ENCODE measurements at regions of chr4 and their contacts with region 1.

Region 1: DNA sequence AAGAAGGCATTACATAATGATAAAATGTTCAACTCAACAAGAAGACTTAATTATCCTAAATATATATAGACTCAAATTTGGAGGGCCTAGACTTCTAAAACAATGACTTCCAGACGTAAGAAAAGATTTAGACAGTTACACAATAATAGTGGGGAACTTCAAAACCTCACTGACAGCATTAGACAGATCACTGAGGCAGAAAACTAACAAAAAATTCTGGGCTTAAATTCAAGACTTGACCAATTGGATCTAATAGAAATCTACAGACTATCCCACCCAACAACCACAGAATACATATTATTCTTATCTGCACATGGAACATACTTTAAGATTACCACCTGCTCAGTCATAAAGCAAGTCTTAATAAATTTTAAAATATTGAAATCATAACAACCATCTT is 93.3 kb upstream of the ARSJ start:
- H3K4me3 Mint-ChIP-seq: no peak overlapping the region
- H3K27ac Mint-ChIP-seq: no peak overlapping the region
- H3K4me1 Mint-ChIP-seq: no peaks in the 10 kb centered on the region
- H3K27me3 Mint-ChIP-seq: no peaks in the 10 kb centered on the region

Region 2: DNA sequence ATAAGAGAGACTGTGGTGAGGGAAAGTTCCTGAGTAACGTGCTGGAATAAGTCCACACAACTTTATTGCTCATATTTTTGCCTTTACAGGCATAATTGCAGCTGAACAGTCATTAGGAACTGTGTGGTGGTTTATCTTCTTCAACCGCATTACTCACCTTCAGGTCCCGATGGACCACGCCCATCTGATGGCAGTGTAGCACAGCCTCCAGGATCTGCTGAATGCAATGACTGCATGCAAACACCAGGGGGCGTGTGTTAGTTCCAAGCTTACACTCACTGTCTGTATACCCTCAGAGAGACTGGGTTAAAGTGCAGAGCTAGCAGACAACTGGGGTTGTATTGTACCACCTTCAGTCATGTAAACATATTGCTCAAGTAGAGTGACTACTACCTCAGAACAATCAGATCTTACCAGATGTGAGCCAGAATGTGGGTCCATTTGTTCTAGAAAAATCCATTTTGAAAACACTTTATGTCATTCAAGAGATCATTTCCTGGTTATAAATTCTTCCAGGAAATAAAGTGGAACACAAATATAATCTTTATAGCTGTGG is 525.2 kb before region 1 on chr4:
- intact Hi-C with region 1: loop called (anchors 2 kb)
- H3K4me3 Mint-ChIP-seq: no peak overlapping the region
- H3K27ac Mint-ChIP-seq: no peak overlapping the region
- H3K4me1 Mint-ChIP-seq: no peaks in the 10 kb centered on the region
- H3K27me3 Mint-ChIP-seq: no peaks in the 10 kb centered on the region

Region 3: GRCh38 chr4:113952452-113953029 is 120.2 kb before region 1 on chr4:
- intact Hi-C with region 1: loop called (anchors 2 kb)
- H3K4me3 Mint-ChIP-seq: no peak overlapping the region
- H3K27ac Mint-ChIP-seq: no peak overlapping the region
- H3K4me1 Mint-ChIP-seq: no peaks in the 10 kb centered on the region
- H3K27me3 Mint-ChIP-seq: peaks cover 6% of the 10 kb centered on the region

Region 4: GRCh38 chr4:114116861-114117260 is 44.1 kb after region 1 on chr4:
- intact Hi-C with region 1: no loop called
- H3K4me3 Mint-ChIP-seq: no peak overlapping the region
- H3K27ac Mint-ChIP-seq: no peak overlapping the region
- H3K4me1 Mint-ChIP-seq: no peaks in the 10 kb centered on the region
- H3K27me3 Mint-ChIP-seq: no peaks in the 10 kb centered on the region

Measured in dendritic cell treated with granulocyte-macrophage colony-stimulating factor and Interleukin-4, amounts not matched to agents 40 ng/mL and 50 ng/mL, for 4 days (primary cell).